ENCODE measurements at regions of chr5 and their contacts with region 1.

Region 1: DNA sequence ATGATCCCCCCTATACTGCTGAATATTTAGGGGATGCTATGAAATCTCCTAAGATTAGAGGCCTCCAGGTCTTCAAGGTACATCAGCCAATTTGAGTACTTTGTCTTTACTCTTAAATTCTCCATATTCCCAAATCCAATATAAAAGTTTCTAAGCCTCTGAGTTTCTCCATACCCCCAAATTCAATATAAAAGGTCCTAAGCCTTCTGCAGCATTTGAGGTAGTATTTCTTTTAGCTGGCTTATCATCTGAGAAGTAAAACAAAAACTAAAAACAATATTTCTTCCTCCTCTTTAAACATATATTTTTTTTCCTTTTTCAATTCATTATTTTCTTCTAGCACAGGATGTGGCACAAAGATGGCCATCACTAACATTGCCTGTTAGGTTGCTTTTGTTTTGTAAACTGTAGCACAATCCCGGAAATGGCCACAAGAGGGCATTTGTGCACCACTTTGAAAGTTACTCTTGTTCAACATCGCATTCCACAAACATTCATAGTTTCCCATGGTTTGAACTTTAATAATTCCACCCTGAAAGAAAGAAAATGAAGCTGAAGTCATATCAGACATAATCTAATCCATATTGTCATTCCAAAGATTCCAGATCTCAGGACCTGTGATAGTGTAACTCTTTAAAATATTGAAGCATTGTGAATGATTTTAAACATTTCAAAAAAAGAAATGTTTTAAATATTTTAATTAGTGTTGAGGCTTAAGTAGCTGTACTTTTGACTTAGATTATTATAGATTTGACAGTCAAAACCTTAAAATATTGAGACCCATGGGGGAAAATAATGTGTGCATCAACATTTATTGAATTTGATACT is 21.0 kb upstream of the SCGB3A2 start:
- DNase-seq: peak; percentile 47
- ATAC-seq: peak; percentile 78
- H3K4me3 ChIP-seq: no peak overlapping the region
- H3K27ac ChIP-seq: no peak overlapping the region
- H3K4me1 ChIP-seq: no peaks in the 10 kb centered on the region
- H3K27me3 ChIP-seq: peaks cover 5% of the 10 kb centered on the region; the same call in 1 of the 2 replicates
- CTCF ChIP-seq: peak; percentile 57 to 81 (median 76); a peak in 5 of 6 replicates
- POLR2A ChIP-seq: no peak
- RAD21 ChIP-seq: peak; percentile 71

Region 2: GRCh38 chr5:148005788-148006520 is 148.4 kb after region 1 on chr5:
- CTCF ChIA-PET with region 1: no interaction called
- POLR2A ChIA-PET with region 1: no interaction called
- RAD21 ChIA-PET with region 1: no interaction called
- intact Hi-C with region 1: no loop called
- DNase-seq: peak; percentile 16
- ATAC-seq: peak; percentile 82
- H3K4me3 ChIP-seq: no peak overlapping the region
- H3K27ac ChIP-seq: no peak overlapping the region
- H3K4me1 ChIP-seq: no peaks in the 10 kb centered on the region
- H3K27me3 ChIP-seq: no peaks in the 10 kb centered on the region
- CTCF ChIP-seq: peak in 2 of 3 experiments; percentile 50 to 66; a peak in 4 of 6 replicates
- POLR2A ChIP-seq: no peak
- RAD21 ChIP-seq: no peak

Region 3: GRCh38 chr5:148107608-148108007 is 250.1 kb after region 1 on chr5:
- CTCF ChIA-PET with region 1: no interaction called
- POLR2A ChIA-PET with region 1: no interaction called
- RAD21 ChIA-PET with region 1: no interaction called
- intact Hi-C with region 1: loop called (anchors 5 kb)
- DNase-seq: no peak
- ATAC-seq: peak; percentile 62
- H3K4me3 ChIP-seq: no peak overlapping the region
- H3K27ac ChIP-seq: no peak overlapping the region
- H3K4me1 ChIP-seq: no peaks in the 10 kb centered on the region
- H3K27me3 ChIP-seq: no peaks in the 10 kb centered on the region
- CTCF ChIP-seq: no peak
- POLR2A ChIP-seq: no peak
- RAD21 ChIP-seq: peak; percentile 54